Head of caudate nucleus (tissue), 42 donors: ENCODE measurements at regions of chr20 and their contacts with region 1.

Region 1: GRCh38 chr20:45971675-45972499 is at the start of gene ZNF335:
- DNase-seq: peak; percentile 82 to 98 (median 96)

Region 2: GRCh38 chr20:45752746-45753145 is 219.1 kb before region 1 on chr20:
- intact Hi-C with region 1: no loop called
- DNase-seq: no peak

Region 3: DNA sequence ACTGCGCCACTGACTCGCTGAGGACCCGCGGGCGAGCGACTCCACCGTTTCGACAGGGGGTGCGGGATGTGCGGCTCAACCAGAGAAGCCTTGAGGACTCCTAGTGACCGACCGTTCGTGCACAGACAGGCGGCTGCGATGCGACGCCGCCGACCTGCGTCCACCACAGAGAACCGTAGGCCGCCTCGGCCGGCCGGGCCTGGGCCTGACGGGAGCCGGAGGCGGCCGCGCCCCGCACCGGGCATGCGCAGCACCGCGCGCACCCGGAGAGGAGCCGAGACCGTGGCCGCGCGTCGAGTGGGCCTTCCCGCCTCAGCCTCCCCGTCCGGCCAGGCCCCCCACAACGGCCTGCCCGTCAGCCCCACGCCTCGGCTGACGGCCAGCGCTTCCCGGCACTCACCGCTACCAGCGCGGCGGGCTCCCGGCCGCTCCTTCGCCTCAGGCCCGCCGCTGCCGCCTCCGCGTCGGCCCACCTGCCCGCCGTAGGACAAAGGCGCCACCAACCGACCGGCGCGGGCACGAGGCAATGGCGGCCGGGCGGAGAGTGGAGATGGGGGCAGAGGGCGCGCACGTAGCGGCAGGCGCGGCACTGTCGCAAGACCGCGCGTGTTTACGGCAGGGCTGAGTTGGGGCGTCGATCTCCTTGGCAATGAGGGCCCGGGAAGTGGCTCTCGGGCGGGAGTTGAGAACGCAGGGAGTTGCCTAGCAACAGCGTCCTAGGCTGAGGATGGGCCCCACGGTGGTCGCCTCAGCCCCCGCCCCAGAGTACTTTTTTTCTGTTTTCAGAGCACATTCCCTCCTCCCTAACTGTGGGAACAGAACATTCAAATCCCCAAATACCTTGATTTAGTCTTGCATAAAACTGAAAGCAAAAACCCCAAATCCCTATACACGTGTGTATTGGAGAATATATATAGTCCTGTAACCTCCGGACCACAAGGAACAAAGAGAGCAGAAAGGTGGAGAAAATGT is 117.8 kb after region 1 on chr20 and contains the start of gene NCOA5:
- intact Hi-C with region 1: loop called (anchors 5 kb)
- DNase-seq: peak; percentile 92 to 99 (median 97)